ENCODE measurements at regions of chr19 and their contacts with region 1.

Region 1: DNA sequence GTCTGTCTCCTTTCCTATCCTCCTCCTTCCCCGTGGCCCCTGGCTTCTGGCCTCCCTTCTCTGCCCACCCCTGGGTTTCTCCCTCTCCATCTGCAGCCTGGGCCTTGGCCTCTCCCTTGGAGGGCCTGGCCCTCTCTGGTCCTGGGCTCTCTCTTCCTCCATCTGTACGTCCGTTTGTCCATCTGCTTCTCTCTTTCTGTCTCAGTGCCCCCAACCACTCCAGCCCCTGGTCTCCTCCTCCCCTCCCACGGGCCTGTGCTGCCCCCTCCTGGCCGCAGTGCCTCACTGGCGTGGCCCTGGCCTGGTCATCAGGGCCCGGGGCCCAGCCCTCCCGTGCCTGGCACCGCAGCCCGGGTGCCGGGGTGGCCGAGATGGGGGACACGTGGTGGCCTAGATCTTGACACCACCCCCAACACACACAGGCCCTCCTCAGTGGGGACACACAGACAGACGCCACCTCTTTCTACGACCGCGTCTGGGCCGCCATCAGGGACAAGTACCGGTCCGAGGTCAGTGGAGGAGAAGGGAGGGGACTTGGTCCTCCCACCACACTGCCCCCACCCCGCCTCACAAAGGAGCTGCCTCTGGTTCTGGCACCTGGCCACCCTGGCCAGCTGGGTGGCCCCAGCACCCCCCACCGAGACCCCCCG is 11.3 kb downstream of the PRKCSH start:
- DNase-seq: peak; percentile 62
- H3K4me3 ChIP-seq: no peak overlapping the region
- H3K27ac ChIP-seq: no peak overlapping the region
- H3K4me1 ChIP-seq: no peaks in the 10 kb centered on the region
- H3K27me3 ChIP-seq: no peaks in the 10 kb centered on the region
- CTCF ChIP-seq: peak; percentile 46

Region 2: GRCh38 chr19:11179716-11180297 is 267.0 kb before region 1 on chr19:
- intact Hi-C with region 1: no loop called
- DNase-seq: no peak
- H3K4me3 ChIP-seq: no peak overlapping the region
- H3K27ac ChIP-seq: peak overlapping the region; percentile 47
- H3K4me1 ChIP-seq: peaks cover 7% of the 10 kb centered on the region
- H3K27me3 ChIP-seq: no peaks in the 10 kb centered on the region
- CTCF ChIP-seq: no peak

Region 3: GRCh38 chr19:11293433-11294389 is 153.1 kb before region 1 on chr19:
- intact Hi-C with region 1: loop called (anchors 5 kb)
- DNase-seq: peak; percentile 95
- H3K4me3 ChIP-seq: peak overlapping the region; percentile 19
- H3K27ac ChIP-seq: no peak overlapping the region
- H3K4me1 ChIP-seq: no peaks in the 10 kb centered on the region
- H3K27me3 ChIP-seq: no peaks in the 10 kb centered on the region
- CTCF ChIP-seq: peak; percentile 98

Region 4: DNA sequence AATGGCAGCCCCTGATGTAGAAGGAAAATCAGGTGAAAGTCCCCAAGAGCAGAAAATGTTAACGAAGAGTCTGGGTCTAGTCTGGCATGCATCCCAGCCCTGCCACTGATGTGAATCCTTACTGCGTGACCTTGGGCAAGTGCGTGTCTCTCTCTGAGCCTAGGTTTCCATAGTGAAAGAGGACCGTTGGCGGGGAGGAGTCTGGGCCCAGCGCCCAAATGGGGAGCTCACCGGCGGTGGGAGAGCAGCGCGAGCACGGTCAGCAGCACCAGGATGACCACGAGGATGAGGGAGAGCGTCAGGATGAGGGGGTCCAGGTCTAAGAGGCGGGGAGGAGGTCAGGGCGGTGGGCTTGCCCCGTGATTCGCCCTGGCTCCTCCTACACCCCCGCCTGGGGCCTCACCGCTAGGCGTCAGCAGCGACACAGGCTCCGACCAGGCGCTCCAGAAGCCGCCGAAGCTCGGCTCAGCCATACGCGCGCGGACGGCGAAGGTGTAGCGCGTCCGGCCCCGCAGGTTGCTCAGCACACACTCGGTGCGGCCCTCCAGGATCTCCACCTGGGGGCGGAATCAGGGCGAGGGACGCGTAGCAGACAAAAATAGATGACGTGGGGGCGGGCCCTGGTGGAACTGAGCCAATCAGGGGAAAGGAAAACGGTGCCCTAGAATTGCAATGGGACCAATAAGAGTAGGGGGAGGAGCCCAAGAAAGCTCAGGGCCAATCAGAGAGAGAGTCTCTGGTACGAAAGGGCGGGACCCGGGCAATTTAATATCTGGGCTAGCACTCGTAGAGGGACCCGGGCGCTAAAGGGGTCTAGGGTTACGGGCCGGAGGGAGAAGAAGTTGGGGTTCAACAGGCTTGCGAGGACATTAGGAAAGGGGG is 65.9 kb before region 1 on chr19:
- intact Hi-C with region 1: loop called (anchors 5 kb)
- DNase-seq: peak; percentile 98
- H3K4me3 ChIP-seq: peak overlapping the region; percentile 65
- H3K27ac ChIP-seq: peak overlapping the region; percentile 82
- H3K4me1 ChIP-seq: peaks cover 11% of the 10 kb centered on the region
- H3K27me3 ChIP-seq: no peaks in the 10 kb centered on the region
- CTCF ChIP-seq: peak; percentile 75

Measured in colonic mucosa (tissue), 4 donors.